Activated CD4-positive, alpha-beta T cell treated with anti-CD3 and anti-CD28 coated beads for 36 hours (primary cell): ENCODE measurements at regions of chr1 and their contacts with region 1.

Region 1: GRCh38 chr1:55478742-55479141 is 263.6 kb upstream of the USP24 start:
- DNase-seq: no peak
- ATAC-seq: no peak
- H3K4me3 Mint-ChIP-seq: no peak overlapping the region
- H3K27ac Mint-ChIP-seq: no peak overlapping the region
- H3K4me1 Mint-ChIP-seq: no peaks in the 10 kb centered on the region
- H3K27me3 Mint-ChIP-seq: peaks cover 7% of the 10 kb centered on the region

Region 2: GRCh38 chr1:55284852-55285251 is 193.9 kb before region 1 on chr1:
- CTCF ChIA-PET with region 1: no interaction called
- POLR2A ChIA-PET with region 1: no interaction called
- intact Hi-C with region 1: loop called in 1 of 2 experiments (anchors 5 kb)
- DNase-seq: peak; percentile 43
- ATAC-seq: no peak
- H3K4me3 Mint-ChIP-seq: no peak overlapping the region
- H3K27ac Mint-ChIP-seq: no peak overlapping the region
- H3K4me1 Mint-ChIP-seq: peaks cover 16% of the 10 kb centered on the region
- H3K27me3 Mint-ChIP-seq: peaks cover 4% of the 10 kb centered on the region

Region 3: GRCh38 chr1:55382806-55383305 is 95.9 kb before region 1 on chr1:
- CTCF ChIA-PET with region 1: no interaction called
- POLR2A ChIA-PET with region 1: no interaction called
- intact Hi-C with region 1: no loop called
- DNase-seq: no peak
- ATAC-seq: no peak
- H3K4me3 Mint-ChIP-seq: no peak overlapping the region
- H3K27ac Mint-ChIP-seq: no peak overlapping the region
- H3K4me1 Mint-ChIP-seq: peaks cover 12% of the 10 kb centered on the region
- H3K27me3 Mint-ChIP-seq: no peaks in the 10 kb centered on the region

Region 4: GRCh38 chr1:55468142-55468795 is 10.5 kb before region 1 on chr1:
- CTCF ChIA-PET with region 1: no interaction called
- POLR2A ChIA-PET with region 1: no interaction called
- intact Hi-C with region 1: no loop called
- DNase-seq: no peak
- ATAC-seq: no peak
- H3K4me3 Mint-ChIP-seq: no peak overlapping the region
- H3K27ac Mint-ChIP-seq: no peak overlapping the region
- H3K4me1 Mint-ChIP-seq: peaks cover 5% of the 10 kb centered on the region
- H3K27me3 Mint-ChIP-seq: peaks cover 4% of the 10 kb centered on the region

Region 5: DNA sequence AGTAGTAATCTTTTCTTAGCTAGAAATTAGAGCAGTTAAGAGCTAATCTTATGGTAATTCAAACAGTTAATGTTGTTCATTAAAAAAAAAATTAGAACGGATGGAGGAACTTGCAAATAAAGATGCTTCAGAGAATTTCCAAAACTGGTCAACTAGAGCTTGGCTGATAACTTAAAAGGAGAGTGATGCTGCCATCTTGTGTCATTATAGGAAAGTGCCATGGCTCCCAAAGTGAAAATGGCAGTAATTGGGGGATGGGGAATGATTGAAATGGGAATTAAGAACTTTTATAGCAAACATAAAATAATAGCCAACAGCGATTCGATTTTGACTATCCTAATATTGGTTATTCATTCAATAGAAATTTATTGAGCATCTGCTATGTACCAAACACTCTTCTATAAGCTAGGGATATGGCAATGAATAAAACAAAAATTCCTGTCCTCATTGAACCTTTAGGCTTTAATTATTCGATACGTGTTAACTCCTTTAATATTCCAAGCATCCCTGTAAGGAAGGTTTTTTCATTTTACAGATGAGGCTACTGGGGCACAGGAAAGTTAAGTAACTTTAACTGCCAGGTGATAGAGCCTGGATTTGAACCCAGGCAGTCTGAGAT is 1106.3 kb after region 1 on chr1:
- CTCF ChIA-PET with region 1: interaction called, 5 read pairs
- POLR2A ChIA-PET with region 1: no interaction called
- intact Hi-C with region 1: loop called (anchors 2 to 10 kb)
- DNase-seq: no peak
- ATAC-seq: no peak
- H3K4me3 Mint-ChIP-seq: no peak overlapping the region
- H3K27ac Mint-ChIP-seq: no peak overlapping the region
- H3K4me1 Mint-ChIP-seq: peaks cover under 1% of the 10 kb centered on the region
- H3K27me3 Mint-ChIP-seq: peaks cover 10% of the 10 kb centered on the region

Region 6: DNA sequence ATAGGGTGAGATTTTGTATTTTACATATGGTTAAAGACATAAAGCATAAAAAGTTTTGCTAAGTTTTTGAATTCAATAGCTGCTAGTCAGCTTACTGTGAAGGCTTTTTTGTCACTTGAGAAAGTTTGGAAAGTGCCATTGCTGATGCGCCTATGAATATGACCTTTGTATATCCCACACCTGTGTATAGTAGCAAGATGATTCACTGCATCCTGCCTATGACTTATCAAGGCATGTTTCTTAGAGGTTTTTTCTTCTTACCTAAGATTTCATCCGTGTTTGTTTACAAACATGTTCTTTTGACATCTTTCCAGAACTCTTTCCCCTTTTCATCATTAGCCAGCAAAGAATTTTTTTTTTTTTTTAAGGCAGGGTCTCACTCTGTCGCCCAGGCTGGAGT is 1217.9 kb after region 1 on chr1:
- CTCF ChIA-PET with region 1: no interaction called
- POLR2A ChIA-PET with region 1: no interaction called
- intact Hi-C with region 1: loop called in 1 of 2 experiments (anchors 10 kb)
- DNase-seq: no peak
- ATAC-seq: no peak
- H3K4me3 Mint-ChIP-seq: no peak overlapping the region
- H3K27ac Mint-ChIP-seq: no peak overlapping the region
- H3K4me1 Mint-ChIP-seq: no peaks in the 10 kb centered on the region
- H3K27me3 Mint-ChIP-seq: peaks cover 7% of the 10 kb centered on the region

Region 7: GRCh38 chr1:56709269-56709880 is 1230.6 kb after region 1 on chr1:
- CTCF ChIA-PET with region 1: no interaction called
- POLR2A ChIA-PET with region 1: no interaction called
- intact Hi-C with region 1: loop called in 1 of 2 experiments (anchors 5 kb)
- DNase-seq: no peak
- ATAC-seq: peak; percentile 44
- H3K4me3 Mint-ChIP-seq: no peak overlapping the region
- H3K27ac Mint-ChIP-seq: no peak overlapping the region
- H3K4me1 Mint-ChIP-seq: no peaks in the 10 kb centered on the region
- H3K27me3 Mint-ChIP-seq: peaks cover 18% of the 10 kb centered on the region

Region 8: DNA sequence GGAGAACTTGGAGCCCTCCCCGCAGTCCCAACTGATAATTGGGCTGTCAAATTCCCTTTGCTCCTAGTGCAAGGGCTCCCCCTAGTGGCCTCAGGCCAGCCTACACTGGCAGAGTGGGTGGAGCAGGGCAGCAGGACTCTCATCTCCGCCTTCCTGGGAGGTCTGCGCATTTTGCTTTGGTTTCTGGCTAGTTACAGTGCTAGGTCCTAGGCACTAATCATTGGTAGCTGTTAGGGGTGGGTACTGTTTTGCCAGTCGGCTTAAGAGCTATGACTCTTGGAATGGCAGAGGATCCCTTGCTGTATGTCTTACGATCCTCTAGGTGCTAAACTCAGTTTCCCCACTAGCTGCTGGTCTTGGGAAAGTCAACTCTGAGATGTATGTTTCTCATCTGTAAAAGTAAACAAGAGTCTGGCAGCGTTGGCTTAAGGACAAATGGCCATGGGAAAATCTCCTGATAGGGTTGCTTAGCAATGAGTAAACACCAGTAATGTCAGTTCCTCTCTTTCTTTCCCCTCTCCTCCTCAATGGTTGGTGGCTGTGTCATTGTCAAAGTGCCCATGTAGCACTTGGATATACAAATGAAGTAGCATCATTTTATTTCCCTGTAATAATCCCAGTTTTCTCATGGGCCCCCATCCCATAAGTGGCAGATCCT is 1342.5 kb after region 1 on chr1:
- CTCF ChIA-PET with region 1: no interaction called
- POLR2A ChIA-PET with region 1: no interaction called
- intact Hi-C with region 1: loop called in 1 of 2 experiments (anchors 10 kb)
- DNase-seq: peak; percentile 87
- ATAC-seq: peak; percentile 71
- H3K4me3 Mint-ChIP-seq: no peak overlapping the region
- H3K27ac Mint-ChIP-seq: no peak overlapping the region
- H3K4me1 Mint-ChIP-seq: no peaks in the 10 kb centered on the region
- H3K27me3 Mint-ChIP-seq: peaks cover 6% of the 10 kb centered on the region